Right lobe of liver (tissue), 6 donors: ENCODE measurements at regions of chr14 and their contacts with region 1.

Region 1: DNA sequence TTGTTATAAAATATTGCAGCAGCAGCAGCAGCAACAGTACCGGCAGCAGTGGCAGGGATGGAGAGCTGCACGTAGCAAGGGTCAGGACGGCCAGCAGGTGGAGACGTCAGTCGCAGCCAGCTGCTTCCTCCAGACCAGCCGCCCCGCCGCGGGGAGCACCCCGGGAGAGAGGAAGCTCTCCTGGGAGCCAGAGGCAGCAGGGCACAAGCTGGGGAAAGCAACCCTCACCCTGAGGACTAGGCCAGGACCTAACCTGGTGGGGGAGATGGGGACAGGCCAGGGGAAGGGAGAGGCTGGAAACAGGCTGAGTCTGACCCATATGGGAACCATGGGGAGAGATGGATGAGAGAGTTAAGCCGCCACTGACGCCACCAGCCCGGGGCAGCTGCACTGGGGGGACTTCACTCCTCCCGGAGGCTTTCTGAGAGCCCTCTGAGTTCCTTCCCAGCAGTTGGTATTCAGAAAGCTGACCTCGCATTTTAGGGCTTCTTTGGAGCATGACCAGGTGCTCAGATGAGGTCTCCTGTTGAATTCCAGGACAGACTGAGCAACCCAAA is 56.3 kb downstream of the SPTB start:
- DNase-seq: peak; percentile 80 to 85 (median 83)
- ATAC-seq: peak; percentile 95 to 99 (median 98)
- H3K4me3 ChIP-seq: no peak overlapping the region
- H3K27ac ChIP-seq: no peak overlapping the region
- H3K4me1 ChIP-seq: no peaks in the 10 kb centered on the region
- H3K27me3 ChIP-seq: no peaks in the 10 kb centered on the region
- CTCF ChIP-seq: peak; percentile 76 to 86 (median 82)
- POLR2A ChIP-seq: no peak

Region 2: GRCh38 chr14:64879635-64880220 is 56.3 kb after region 1 on chr14 and contains the start of gene SPTB:
- intact Hi-C with region 1: loop called in 1 of 2 experiments (anchors 10 kb)
- DNase-seq: peak; percentile 60 to 82 (median 64)
- ATAC-seq: peak; percentile 74 to 94 (median 89)
- H3K4me3 ChIP-seq: peak within 1 kb of the TSS; percentile 50 to 56 (median 53)
- H3K27ac ChIP-seq: no peak within 1 kb of the TSS
- H3K4me1 ChIP-seq: peaks cover 0 to 13% (median 0%) of the 10 kb centered on the region in 4 donors
- H3K27me3 ChIP-seq: no peaks in the 10 kb centered on the region
- CTCF ChIP-seq: no peak
- POLR2A ChIP-seq: no peak
- total RNA-seq, gene SPTB: 0.12 to 2.4 (median 0.72) TPM

Region 3: GRCh38 chr14:64891839-64892375 is 68.5 kb after region 1 on chr14:
- intact Hi-C with region 1: loop called in 1 of 2 experiments (anchors 5 kb)
- DNase-seq: no peak
- ATAC-seq: peak; percentile 91 to 98 (median 92)
- H3K4me3 ChIP-seq: no peak overlapping the region
- H3K27ac ChIP-seq: no peak overlapping the region
- H3K4me1 ChIP-seq: no peaks in the 10 kb centered on the region
- H3K27me3 ChIP-seq: no peaks in the 10 kb centered on the region
- CTCF ChIP-seq: peak; percentile 61 to 75 (median 63)
- POLR2A ChIP-seq: no peak